OCI-LY7 (cell line): ENCODE measurements at regions of chr10 and their contacts with region 1.

Region 1: DNA sequence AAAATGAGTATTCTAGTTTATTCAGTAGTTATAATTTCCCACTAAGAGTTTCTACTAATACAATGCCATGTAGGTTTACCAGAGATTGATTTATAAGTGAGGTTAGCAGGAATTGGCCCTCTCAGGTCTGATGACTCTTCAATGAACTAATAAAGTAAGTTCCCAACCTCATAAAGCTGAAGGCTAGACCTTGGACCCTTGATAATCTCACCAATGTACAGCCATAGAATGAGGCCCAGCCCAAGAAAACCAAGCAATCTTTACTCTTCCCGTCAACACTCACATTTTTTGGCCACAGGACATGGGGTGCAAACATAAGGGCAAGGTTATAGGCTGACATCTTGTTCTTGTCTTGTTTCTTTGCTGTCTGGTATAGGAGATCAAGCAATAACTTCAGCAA is 33.3 kb downstream of the ARHGAP19 start:
- DNase-seq: no peak
- H3K4me3 ChIP-seq: no peak overlapping the region
- H3K27ac ChIP-seq: no peak overlapping the region
- H3K4me1 ChIP-seq: no peaks in the 10 kb centered on the region
- CTCF ChIP-seq: no peak

Region 2: DNA sequence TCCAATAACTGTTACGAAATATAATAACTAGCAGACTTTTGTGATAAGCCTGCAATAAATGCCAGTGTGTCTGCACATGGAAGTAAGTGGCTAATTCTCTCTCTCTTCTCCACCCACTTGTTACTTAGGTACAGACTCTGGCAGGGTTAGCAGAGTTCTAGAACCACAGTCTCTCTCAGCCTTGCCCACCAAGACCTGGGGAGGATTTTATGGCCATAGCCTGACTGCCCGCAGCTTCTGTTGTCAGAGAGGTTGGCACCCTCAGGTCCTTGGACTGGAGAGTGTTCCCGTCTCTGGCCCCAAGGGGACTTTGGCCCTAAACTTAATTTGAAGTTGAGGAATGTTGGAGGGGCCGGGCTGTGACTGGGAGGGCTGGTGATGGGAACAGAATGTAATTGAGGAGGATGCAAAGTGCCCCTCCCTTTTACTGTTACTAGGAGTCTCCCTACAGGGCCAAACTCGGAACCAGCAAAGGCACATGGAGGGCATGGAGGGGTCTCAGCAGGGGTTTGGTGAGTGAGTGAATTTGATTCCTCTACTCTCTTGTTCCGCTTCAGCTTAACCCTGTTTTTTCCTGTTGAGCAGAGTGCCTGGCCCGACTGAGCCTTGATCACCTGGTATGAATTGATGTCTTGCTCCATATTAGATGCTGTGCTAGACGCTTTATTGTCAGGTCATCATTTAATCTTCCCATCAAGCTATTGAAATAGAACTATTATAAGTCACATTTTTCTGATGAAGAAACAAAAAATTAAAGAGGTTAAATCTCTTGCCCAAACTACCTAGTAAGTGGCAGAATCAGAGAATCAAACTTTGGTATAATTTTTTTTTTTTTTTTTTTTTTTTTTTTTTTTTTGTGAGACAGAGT is 464.0 kb before region 1 on chr10:
- CTCF ChIA-PET with region 1: no interaction called
- POLR2A ChIA-PET with region 1: no interaction called
- intact Hi-C with region 1: no loop called
- DNase-seq: no peak
- H3K4me3 ChIP-seq: no peak overlapping the region
- H3K27ac ChIP-seq: no peak overlapping the region
- H3K4me1 ChIP-seq: peaks cover 5% of the 10 kb centered on the region
- CTCF ChIP-seq: no peak

Region 3: GRCh38 chr10:96910488-96911395 is 348.4 kb before region 1 on chr10:
- CTCF ChIA-PET with region 1: no interaction called
- POLR2A ChIA-PET with region 1: no interaction called
- intact Hi-C with region 1: no loop called
- DNase-seq: peak; percentile 62
- H3K4me3 ChIP-seq: no peak overlapping the region
- H3K27ac ChIP-seq: no peak overlapping the region
- H3K4me1 ChIP-seq: peaks cover 5% of the 10 kb centered on the region
- CTCF ChIP-seq: peak; percentile 97

Region 4: DNA sequence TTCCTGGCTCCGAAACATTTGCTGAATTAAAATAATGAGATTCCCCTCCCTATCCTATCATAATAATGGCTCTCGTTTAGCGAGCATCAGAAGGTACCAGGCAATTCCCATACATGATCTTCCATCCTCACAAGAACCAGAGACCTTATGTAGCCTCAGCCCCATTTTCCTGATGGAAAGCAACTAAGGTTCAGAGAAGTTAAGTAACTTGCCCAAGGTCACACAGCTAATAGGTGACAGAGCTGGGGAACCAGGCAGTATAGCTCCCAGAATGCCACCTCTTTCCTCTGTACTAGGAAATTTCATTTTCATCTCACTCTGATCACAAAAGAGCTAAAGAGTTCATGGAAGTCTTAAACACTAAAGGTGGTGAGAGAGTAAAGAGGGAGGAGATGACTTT is 75.8 kb before region 1 on chr10:
- CTCF ChIA-PET with region 1: no interaction called
- POLR2A ChIA-PET with region 1: interaction called, 10 read pairs
- intact Hi-C with region 1: no loop called
- DNase-seq: no peak
- H3K4me3 ChIP-seq: no peak overlapping the region
- H3K27ac ChIP-seq: no peak overlapping the region
- H3K4me1 ChIP-seq: peaks cover 10% of the 10 kb centered on the region
- CTCF ChIP-seq: no peak

Region 5: GRCh38 chr10:97353945-97354344 is 94.8 kb after region 1 on chr10:
- CTCF ChIA-PET with region 1: no interaction called
- POLR2A ChIA-PET with region 1: no interaction called
- intact Hi-C with region 1: no loop called
- DNase-seq: no peak
- H3K4me3 ChIP-seq: no peak overlapping the region
- H3K27ac ChIP-seq: no peak overlapping the region
- H3K4me1 ChIP-seq: peaks cover 8% of the 10 kb centered on the region
- CTCF ChIP-seq: no peak